Activated B cell treated with CpG ODN at 0.5 μM for 24 hours (primary cell): ENCODE measurements at regions of chr13 and their contacts with region 1.

Region 1: GRCh38 chr13:74133657-74134201 is 475 bp downstream of the KLF12 start:
- DNase-seq: peak; percentile 79
- ATAC-seq: peak; percentile 51
- H3K4me3 Mint-ChIP-seq: no peak overlapping the region
- H3K27ac Mint-ChIP-seq: peak overlapping the region; percentile 98
- H3K4me1 Mint-ChIP-seq: peaks cover 39% of the 10 kb centered on the region
- H3K27me3 Mint-ChIP-seq: no peaks in the 10 kb centered on the region
- CTCF ChIP-seq: no peak

Region 2: DNA sequence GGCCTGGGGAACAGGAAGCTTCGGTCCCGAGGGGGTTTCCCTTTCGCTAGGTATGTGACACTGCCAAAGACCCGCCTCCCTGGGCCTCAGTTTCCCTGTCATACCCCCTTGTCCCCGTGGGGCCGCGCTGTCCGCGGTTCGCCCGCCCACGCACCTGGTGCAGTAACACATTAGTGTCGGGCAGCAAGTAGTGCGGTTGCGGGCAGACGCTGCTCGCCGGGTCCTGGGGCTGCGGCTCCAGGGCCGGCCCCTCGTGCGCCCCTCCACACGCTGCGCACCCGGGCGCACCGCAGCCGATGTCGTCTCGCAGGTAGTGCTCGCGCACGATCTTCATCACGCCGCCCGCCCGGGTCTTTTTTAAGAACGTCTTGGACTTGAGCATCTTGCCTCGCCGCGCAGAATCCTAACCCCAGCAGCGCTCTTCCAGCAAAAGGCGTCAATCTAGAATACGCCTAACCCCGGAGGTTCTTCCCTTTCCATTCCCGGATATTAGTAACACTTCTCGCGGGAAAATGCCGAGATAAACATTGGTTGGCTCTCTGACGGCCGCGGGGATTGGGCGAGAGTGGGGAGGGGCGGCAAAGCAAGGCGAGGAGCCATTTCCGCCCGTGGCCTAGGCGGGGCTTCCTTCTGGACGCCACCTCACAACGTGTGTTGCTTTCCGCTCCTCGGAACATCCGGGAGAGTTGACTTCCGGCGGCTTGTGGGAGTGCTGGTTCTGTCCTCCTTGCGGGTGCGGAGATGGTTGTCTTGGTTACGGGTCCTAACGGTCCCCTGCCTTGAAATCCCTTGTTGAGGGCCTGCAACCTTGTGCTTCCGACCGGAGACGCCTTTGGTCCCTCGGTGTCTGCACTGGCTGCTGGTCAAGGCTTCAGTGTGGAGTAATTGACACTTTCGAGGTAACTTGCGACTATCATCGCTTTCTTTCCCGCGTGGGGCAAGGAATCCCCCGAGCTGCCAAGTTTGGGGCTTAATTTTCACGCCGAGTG is 1352.0 kb before region 1 on chr13 and contains the starts of genes DIS3 and PIBF1:
- CTCF ChIA-PET with region 1: no interaction called
- POLR2A ChIA-PET with region 1: no interaction called
- intact Hi-C with region 1: loop called (anchors 5 kb)
- DNase-seq: peak; percentile 87
- ATAC-seq: peak; percentile 98
- H3K4me3 Mint-ChIP-seq: peak within 1 kb of the TSS; percentile 99
- H3K27ac Mint-ChIP-seq: peak within 1 kb of the TSS; percentile 98
- H3K4me1 Mint-ChIP-seq: peaks cover 50% of the 10 kb centered on the region
- H3K27me3 Mint-ChIP-seq: no peaks in the 10 kb centered on the region
- CTCF ChIP-seq: no peak
- total RNA-seq, gene DIS3: 43.2 and 45.2 TPM in 2 replicates
- total RNA-seq, gene PIBF1: 25.8 and 32.7 TPM in 2 replicates

Region 3: GRCh38 chr13:73913053-73913740 is 220.5 kb before region 1 on chr13:
- CTCF ChIA-PET with region 1: no interaction called
- POLR2A ChIA-PET with region 1: interaction called, 3 read pairs
- intact Hi-C with region 1: loop called (anchors 2 kb)
- DNase-seq: no peak
- ATAC-seq: no peak
- H3K4me3 Mint-ChIP-seq: no peak overlapping the region
- H3K27ac Mint-ChIP-seq: no peak overlapping the region
- H3K4me1 Mint-ChIP-seq: peaks cover 42% of the 10 kb centered on the region
- H3K27me3 Mint-ChIP-seq: no peaks in the 10 kb centered on the region
- CTCF ChIP-seq: no peak

Region 4: GRCh38 chr13:74026753-74027152 is 107.0 kb before region 1 on chr13:
- CTCF ChIA-PET with region 1: no interaction called
- POLR2A ChIA-PET with region 1: interaction called, 41 read pairs
- intact Hi-C with region 1: loop called (anchors 1 kb)
- DNase-seq: peak; percentile 26
- ATAC-seq: peak; percentile 97
- H3K4me3 Mint-ChIP-seq: peak overlapping the region; percentile 81
- H3K27ac Mint-ChIP-seq: peak overlapping the region; percentile 97
- H3K4me1 Mint-ChIP-seq: peaks cover 70% of the 10 kb centered on the region
- H3K27me3 Mint-ChIP-seq: no peaks in the 10 kb centered on the region
- CTCF ChIP-seq: no peak

Region 5: GRCh38 chr13:74287724-74288169 is 154.0 kb after region 1 on chr13:
- CTCF ChIA-PET with region 1: interaction called, 16 read pairs
- POLR2A ChIA-PET with region 1: interaction called, 50 read pairs
- intact Hi-C with region 1: loop called (anchors 1 kb)
- DNase-seq: peak; percentile 32
- ATAC-seq: peak; percentile 52
- H3K4me3 Mint-ChIP-seq: peak overlapping the region; percentile 77
- H3K27ac Mint-ChIP-seq: peak overlapping the region; percentile 94
- H3K4me1 Mint-ChIP-seq: peaks cover 51% of the 10 kb centered on the region
- H3K27me3 Mint-ChIP-seq: no peaks in the 10 kb centered on the region
- CTCF ChIP-seq: no peak

Region 6: GRCh38 chr13:74662905-74663304 is 529.2 kb after region 1 on chr13:
- CTCF ChIA-PET with region 1: no interaction called
- POLR2A ChIA-PET with region 1: no interaction called
- intact Hi-C with region 1: no loop called
- DNase-seq: no peak
- ATAC-seq: no peak
- H3K4me3 Mint-ChIP-seq: no peak overlapping the region
- H3K27ac Mint-ChIP-seq: no peak overlapping the region
- H3K4me1 Mint-ChIP-seq: no peaks in the 10 kb centered on the region
- H3K27me3 Mint-ChIP-seq: no peaks in the 10 kb centered on the region
- CTCF ChIP-seq: no peak

Region 7: DNA sequence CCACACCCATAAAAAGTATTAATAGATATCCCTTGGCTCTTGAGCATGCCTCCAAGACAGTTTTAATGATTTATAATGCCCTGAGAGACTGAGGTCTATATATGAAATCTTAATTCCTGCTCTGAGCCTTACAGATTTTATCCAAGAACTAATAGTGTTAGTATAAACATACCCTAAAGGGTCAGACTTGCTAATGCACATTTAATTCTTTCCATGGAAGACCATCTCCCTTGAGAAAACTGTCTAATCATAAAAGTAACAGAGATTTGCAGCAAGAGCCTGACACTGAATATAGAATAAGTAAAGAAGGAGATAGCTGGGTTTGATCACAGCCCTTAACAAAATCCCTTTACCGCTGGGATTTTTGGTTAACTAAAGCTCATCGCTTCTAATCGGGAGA is 651.2 kb after region 1 on chr13:
- CTCF ChIA-PET with region 1: no interaction called
- POLR2A ChIA-PET with region 1: no interaction called
- intact Hi-C with region 1: no loop called
- DNase-seq: no peak
- ATAC-seq: no peak
- H3K4me3 Mint-ChIP-seq: no peak overlapping the region
- H3K27ac Mint-ChIP-seq: no peak overlapping the region
- H3K4me1 Mint-ChIP-seq: no peaks in the 10 kb centered on the region
- H3K27me3 Mint-ChIP-seq: no peaks in the 10 kb centered on the region
- CTCF ChIP-seq: no peak

Region 8: GRCh38 chr13:75549262-75550158 is 1415.8 kb after region 1 on chr13 and contains the start of gene UCHL3:
- CTCF ChIA-PET with region 1: no interaction called
- POLR2A ChIA-PET with region 1: no interaction called
- intact Hi-C with region 1: loop called (anchors 2 kb)
- DNase-seq: peak; percentile 96
- ATAC-seq: peak; percentile 94
- H3K4me3 Mint-ChIP-seq: peak within 1 kb of the TSS; percentile 98
- H3K27ac Mint-ChIP-seq: peak within 1 kb of the TSS; percentile 99
- H3K4me1 Mint-ChIP-seq: peaks cover 39% of the 10 kb centered on the region
- H3K27me3 Mint-ChIP-seq: no peaks in the 10 kb centered on the region
- CTCF ChIP-seq: no peak
- total RNA-seq, gene UCHL3: 21.9 and 22.7 TPM in 2 replicates